WTC11 (cell line): ENCODE measurements at regions of chr21 and their contacts with region 1.

Region 1: GRCh38 chr21:33931799-33932390 is 16.3 kb upstream of the ATP5PO start:
- DNase-seq: no peak
- ATAC-seq: no peak
- H3K4me3 Mint-ChIP-seq: peak overlapping the region; percentile 89
- H3K27ac Mint-ChIP-seq: peak overlapping the region; percentile 98
- H3K4me1 Mint-ChIP-seq: peaks cover 31% of the 10 kb centered on the region
- H3K27me3 Mint-ChIP-seq: no peaks in the 10 kb centered on the region
- CTCF ChIP-seq: no peak

Region 2: DNA sequence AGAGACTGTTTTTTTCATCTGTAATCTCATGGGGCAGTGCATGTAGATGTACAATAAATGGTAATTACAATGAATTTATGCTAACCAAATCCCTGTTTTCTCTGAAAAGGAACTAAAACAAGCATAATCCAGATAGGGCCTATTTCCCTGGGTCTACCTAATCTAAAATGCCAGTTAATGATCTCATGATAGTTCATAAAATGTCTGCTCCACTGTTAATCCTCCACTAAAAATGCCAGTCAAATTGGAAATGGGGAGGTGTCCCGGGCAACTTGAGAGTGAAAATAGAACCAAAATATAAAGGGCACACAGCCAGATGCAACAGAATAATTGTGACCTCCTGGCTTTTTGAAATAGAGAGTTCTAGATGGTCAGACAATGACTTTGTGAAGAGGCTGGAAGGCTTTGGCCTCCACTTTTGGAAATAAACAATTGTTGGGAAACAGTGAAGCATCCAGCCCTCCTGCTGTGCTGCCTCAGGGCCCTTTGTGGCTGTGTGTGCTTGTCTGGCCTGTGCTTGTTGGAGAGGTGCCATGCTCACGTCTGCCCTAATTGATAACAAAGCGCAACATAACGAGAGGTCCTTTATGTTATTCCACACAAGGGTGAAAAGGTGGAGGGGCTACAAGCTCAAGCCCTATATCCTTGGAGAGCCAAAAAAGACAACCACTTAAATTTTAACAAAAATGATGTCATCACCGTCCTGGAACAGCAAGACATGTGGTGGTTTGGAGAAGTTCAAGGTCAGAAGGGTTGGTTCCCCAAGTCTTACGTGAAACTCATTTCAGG is 114.0 kb before region 1 on chr21:
- CTCF ChIA-PET with region 1: no interaction called
- POLR2A ChIA-PET with region 1: no interaction called
- DNase-seq: no peak
- ATAC-seq: no peak; the same call in 1 of the 2 replicates
- H3K4me3 Mint-ChIP-seq: no peak overlapping the region
- H3K27ac Mint-ChIP-seq: no peak overlapping the region
- H3K4me1 Mint-ChIP-seq: peaks cover 26% of the 10 kb centered on the region
- H3K27me3 Mint-ChIP-seq: no peaks in the 10 kb centered on the region
- CTCF ChIP-seq: no peak

Region 3: GRCh38 chr21:33947451-33948095 is 15.7 kb after region 1 on chr21:
- CTCF ChIA-PET with region 1: no interaction called
- POLR2A ChIA-PET with region 1: interaction called, 11 read pairs
- DNase-seq: peak; percentile 62
- ATAC-seq: peak; percentile 91
- H3K4me3 Mint-ChIP-seq: peak overlapping the region; percentile 55
- H3K27ac Mint-ChIP-seq: peak overlapping the region; percentile 99
- H3K4me1 Mint-ChIP-seq: peaks cover 37% of the 10 kb centered on the region
- H3K27me3 Mint-ChIP-seq: no peaks in the 10 kb centered on the region
- CTCF ChIP-seq: no peak